ENCODE measurements at regions of chr11 and their contacts with region 1.

Region 1: GRCh38 chr11:102451681-102452460 is 694 bp downstream of the TMEM123 start:
- DNase-seq: peak; percentile 75
- H3K4me3 Mint-ChIP-seq: peak overlapping the region; percentile 89
- H3K27ac Mint-ChIP-seq: peak overlapping the region; percentile 89
- H3K4me1 Mint-ChIP-seq: peaks cover 73% of the 10 kb centered on the region
- H3K27me3 Mint-ChIP-seq: no peaks in the 10 kb centered on the region

Region 2: DNA sequence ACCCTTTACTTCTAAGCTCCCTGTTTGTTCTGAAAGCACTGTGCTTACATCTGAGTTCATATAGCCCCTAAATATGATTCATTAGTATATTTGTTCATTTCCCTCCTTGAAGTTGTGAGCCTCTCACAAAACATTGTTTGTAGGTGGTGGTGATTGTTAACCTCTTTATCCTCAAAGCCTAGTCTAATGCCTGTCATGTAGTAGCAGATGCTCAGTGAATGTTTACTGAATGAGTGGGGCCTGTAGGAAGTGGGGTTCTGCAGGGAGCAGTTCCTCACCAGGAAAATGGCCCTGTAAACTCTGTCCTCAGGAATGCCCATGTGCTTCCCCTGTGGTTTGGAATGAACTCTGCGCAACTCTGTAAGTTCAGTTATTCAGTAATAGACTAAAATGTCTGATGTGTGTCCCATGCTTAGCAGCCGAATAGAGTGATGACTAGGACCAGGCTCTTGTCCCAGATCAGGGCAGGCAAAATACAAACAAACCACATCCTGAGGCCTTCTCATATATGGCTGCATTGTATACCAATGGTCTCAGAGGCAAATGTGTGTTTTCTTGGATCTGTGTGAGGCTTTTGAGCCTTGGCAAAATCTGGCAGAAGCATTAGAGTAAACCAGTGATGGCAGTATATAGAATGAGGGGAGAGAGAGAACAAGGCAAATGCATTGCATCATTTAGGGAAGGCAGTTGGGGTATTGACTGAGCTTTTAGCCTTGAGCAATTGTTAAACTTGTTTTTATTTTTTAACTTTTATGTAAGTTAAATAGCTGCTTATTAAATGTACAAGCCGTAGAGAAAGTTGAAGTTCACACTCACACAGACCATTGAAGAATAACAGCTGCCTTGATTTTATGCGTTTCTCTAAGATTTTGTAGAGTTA is 225.9 kb before region 1 on chr11:
- intact Hi-C with region 1: no loop called
- DNase-seq: no peak
- H3K4me3 Mint-ChIP-seq: no peak overlapping the region
- H3K27ac Mint-ChIP-seq: no peak overlapping the region
- H3K4me1 Mint-ChIP-seq: no peaks in the 10 kb centered on the region
- H3K27me3 Mint-ChIP-seq: peaks cover 13% of the 10 kb centered on the region

Region 3: DNA sequence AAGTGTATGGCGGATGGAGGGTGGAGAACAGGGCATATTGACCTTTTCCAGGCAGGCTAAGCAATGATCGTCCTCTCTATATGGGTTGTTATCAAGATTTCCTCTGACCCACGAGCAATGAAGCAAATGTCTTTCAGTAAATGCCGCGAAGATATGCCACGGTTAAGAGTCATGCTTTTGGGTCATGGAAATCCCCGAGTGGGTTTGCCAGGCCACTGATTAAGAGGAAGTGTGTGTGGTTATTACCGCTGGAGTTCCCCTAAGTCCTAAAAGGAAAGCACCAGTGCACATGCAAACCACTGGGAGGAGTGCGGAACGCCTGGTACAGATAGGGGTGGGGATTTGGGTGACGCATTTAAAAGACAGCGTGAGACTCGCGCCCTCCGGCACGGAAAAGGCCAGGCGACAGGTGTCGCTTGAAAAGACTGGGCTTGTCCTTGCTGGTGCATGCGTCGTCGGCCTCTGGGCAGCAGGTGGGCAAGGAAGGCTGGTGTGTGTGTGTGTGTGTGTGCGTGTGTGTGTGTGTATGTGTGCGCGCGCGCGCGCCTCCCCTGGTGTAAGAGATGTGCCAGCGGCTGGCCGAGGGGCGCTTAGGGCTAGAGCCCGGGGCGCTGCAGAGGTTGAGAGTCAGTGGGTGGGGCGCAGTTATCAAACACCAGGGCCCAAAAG is 134.6 kb before region 1 on chr11 and contains the start of gene BIRC3:
- intact Hi-C with region 1: loop called (anchors 1 kb)
- DNase-seq: peak; percentile 91
- H3K4me3 Mint-ChIP-seq: peak within 1 kb of the TSS; percentile 98
- H3K27ac Mint-ChIP-seq: peak within 1 kb of the TSS; percentile 99
- H3K4me1 Mint-ChIP-seq: peaks cover 58% of the 10 kb centered on the region
- H3K27me3 Mint-ChIP-seq: no peaks in the 10 kb centered on the region
- total RNA-seq, gene BIRC3: 217 and 221 TPM in 2 replicates

Region 4: DNA sequence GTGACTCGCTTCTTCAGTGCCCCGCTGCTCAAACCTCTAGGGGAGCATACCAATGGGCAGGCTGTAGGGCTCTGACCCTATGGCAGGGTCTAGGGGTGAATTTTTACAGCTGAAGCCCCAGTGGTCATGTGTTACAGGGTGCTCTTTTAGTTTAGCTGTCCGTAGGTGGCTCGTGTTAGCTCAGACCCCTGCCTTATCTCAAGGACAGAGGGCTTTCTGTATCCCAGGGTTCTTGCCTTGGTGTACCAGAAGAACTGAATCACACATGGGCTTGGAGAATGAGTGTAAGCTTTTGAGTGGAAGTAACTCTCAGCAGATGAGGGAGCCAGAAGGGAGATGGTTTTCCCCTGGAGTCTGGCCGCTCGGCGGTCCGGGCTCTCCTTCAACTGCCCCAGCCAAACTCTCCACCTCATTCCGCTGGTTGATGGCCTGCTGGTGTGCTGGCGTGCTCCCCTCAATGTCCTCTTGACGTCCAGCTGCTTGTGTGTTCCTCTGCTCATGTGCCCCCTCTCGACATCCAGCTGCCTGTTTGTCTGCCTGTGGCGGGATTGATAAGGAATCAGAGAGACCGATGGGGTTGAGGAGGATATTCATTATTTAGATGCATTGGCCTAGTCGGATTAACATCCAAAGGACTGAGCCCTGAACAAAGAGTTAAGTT is 67.3 kb before region 1 on chr11:
- intact Hi-C with region 1: no loop called
- DNase-seq: no peak
- H3K4me3 Mint-ChIP-seq: no peak overlapping the region
- H3K27ac Mint-ChIP-seq: no peak overlapping the region
- H3K4me1 Mint-ChIP-seq: peaks cover 7% of the 10 kb centered on the region
- H3K27me3 Mint-ChIP-seq: no peaks in the 10 kb centered on the region

Region 5: GRCh38 chr11:102396708-102397563 is 54.9 kb before region 1 on chr11:
- intact Hi-C with region 1: loop called (anchors 2 kb)
- DNase-seq: no peak
- H3K4me3 Mint-ChIP-seq: no peak overlapping the region
- H3K27ac Mint-ChIP-seq: peak overlapping the region; percentile 53
- H3K4me1 Mint-ChIP-seq: peaks cover 19% of the 10 kb centered on the region
- H3K27me3 Mint-ChIP-seq: no peaks in the 10 kb centered on the region

Region 6: DNA sequence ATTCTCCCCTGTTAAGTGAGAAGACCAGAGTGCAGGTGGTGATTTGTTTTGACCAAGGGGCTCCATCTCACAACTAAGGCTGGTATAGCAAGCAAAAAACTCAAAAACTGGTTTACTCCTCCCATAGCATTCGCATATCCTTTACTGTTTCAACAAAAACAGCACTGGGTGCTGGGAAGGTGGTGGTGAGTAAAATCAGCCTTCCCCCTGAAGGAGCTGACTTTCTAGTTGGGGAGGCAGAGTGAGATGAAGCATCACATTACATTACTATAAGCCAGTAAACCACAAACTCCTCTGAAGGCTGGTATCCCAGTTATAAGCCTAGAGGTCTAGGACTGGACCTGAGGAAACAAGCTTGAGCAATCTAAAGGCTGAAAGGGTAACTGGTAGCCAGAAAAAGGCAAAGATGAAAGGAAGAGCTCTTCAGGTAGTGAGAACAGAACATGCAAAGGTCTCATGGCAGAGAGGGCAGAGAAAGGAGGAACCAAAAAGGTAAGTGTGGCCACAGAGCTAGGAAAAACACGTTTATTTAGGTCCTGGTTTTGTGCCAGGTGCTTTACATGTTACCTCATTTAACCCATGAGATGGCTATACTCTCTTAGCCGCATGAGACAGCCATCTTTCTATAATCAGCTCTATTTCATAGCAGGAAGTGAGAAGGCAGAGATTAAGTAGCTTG is 21.6 kb before region 1 on chr11:
- intact Hi-C with region 1: loop called (anchors 2 kb)
- DNase-seq: no peak
- H3K4me3 Mint-ChIP-seq: no peak overlapping the region
- H3K27ac Mint-ChIP-seq: peak overlapping the region; percentile 71
- H3K4me1 Mint-ChIP-seq: peaks cover 39% of the 10 kb centered on the region
- H3K27me3 Mint-ChIP-seq: no peaks in the 10 kb centered on the region

Region 7: DNA sequence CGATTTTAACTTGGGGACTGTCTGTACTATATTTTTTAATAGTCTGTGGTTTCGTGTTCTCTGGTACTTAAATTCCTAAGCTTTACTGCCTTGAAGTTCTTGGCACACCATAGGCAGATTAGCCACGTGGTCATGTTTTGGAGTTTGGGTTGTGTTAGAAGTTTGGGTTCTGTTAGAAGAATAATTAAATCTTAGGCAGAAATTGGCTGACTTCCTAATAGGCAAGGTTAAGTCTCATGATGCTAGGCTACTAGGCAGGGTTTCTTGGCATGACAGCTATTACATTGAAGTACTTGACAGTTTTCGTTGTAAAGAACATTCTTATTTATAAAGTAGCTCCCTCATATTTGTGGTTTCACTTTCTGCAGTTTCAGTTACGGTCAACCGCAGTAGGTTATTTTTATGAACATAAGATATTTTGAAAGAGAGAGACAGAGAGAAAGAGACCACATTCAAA is 108.7 kb after region 1 on chr11:
- intact Hi-C with region 1: loop called (anchors 5 kb)
- DNase-seq: no peak
- H3K4me3 Mint-ChIP-seq: peak overlapping the region; percentile 54
- H3K27ac Mint-ChIP-seq: peak overlapping the region; percentile 75
- H3K4me1 Mint-ChIP-seq: peaks cover 45% of the 10 kb centered on the region
- H3K27me3 Mint-ChIP-seq: peaks cover 3% of the 10 kb centered on the region